Caco-2 (cell line): ENCODE measurements at regions of chrX and their contacts with region 1.

Region 1: DNA sequence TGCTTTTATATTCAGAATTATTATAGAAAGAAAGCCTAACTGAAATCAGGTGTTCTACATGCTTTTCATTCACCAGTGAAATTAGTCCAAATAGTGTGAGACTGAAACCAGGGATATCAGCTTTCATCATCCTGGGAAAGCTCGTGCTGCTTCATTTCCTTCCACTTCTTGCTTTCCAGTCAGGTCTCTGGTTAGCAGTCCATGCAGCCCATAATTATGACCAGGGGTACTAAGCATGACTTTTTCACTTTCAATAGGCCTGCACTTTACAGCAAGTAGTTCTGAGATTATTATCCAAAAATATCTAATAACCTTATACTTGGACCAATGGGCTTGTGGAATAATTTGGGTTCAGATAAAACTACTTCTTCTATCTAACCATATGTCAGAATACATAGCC is 673.2 kb upstream of the MAGEB2 start:
- DNase-seq: no peak
- H3K4me3 ChIP-seq: no peak overlapping the region
- H3K4me3 Mint-ChIP-seq: no peak overlapping the region
- H3K27ac Mint-ChIP-seq: no peak overlapping the region
- H3K4me1 ChIP-seq: peaks cover 13% of the 10 kb centered on the region
- H3K4me1 Mint-ChIP-seq: peaks cover 15% of the 10 kb centered on the region
- H3K27me3 ChIP-seq: no peaks in the 10 kb centered on the region
- H3K27me3 Mint-ChIP-seq: no peaks in the 10 kb centered on the region
- CTCF ChIP-seq: no peak

Region 2: DNA sequence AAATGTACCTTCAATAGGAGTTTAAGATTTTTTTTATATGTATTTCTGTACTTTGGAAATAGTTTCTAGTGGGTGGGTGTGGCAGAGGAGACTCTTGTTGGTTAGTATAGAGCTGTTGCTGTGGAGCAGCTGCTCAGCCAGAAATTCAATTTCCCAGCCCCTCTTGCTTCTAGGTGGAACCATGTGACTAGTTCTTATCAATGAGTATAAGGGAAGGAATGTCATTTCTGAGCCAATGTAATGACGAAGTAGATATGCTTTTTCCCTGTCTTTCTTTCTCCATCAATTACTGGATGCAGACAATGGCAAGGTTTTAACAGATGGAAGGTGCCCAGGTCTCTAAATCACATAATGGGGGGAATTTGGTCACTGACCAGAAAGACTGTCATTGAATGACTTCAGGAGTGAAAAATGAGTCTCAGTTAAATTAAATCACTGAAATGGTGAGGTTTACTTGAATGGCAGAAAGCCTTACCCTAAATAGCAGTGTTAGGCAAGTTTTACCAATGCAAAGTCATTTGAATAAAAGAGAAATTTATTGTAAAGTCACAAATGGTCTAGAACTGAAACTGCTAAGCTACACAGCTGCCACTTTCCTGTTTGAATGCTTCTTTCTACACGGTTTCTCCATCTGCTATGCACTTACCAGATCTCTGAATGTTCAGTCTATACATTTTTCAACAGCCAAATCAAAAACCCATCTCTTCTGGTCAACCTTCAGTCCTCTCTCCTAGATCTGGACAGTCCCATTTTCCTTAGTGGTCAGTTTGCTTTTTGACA is 122.2 kb before region 1 on chrX:
- CTCF ChIA-PET with region 1: no interaction called
- POLR2A ChIA-PET with region 1: no interaction called
- intact Hi-C with region 1: loop called (anchors 5 kb)
- DNase-seq: peak; percentile 21 to 50
- H3K4me3 ChIP-seq: no peak overlapping the region
- H3K4me3 Mint-ChIP-seq: no peak overlapping the region
- H3K27ac Mint-ChIP-seq: peak overlapping the region; percentile 71
- H3K4me1 ChIP-seq: peaks cover 40% of the 10 kb centered on the region
- H3K4me1 Mint-ChIP-seq: peaks cover 9% of the 10 kb centered on the region
- H3K27me3 ChIP-seq: no peaks in the 10 kb centered on the region
- H3K27me3 Mint-ChIP-seq: no peaks in the 10 kb centered on the region
- CTCF ChIP-seq: no peak

Region 3: GRCh38 chrX:29496636-29497180 is 45.4 kb before region 1 on chrX:
- CTCF ChIA-PET with region 1: no interaction called
- POLR2A ChIA-PET with region 1: no interaction called
- intact Hi-C with region 1: no loop called
- DNase-seq: no peak
- H3K4me3 ChIP-seq: no peak overlapping the region
- H3K4me3 Mint-ChIP-seq: no peak overlapping the region
- H3K27ac Mint-ChIP-seq: no peak overlapping the region
- H3K4me1 ChIP-seq: no peaks in the 10 kb centered on the region
- H3K4me1 Mint-ChIP-seq: no peaks in the 10 kb centered on the region
- H3K27me3 ChIP-seq: no peaks in the 10 kb centered on the region
- H3K27me3 Mint-ChIP-seq: no peaks in the 10 kb centered on the region
- CTCF ChIP-seq: no peak

Region 4: DNA sequence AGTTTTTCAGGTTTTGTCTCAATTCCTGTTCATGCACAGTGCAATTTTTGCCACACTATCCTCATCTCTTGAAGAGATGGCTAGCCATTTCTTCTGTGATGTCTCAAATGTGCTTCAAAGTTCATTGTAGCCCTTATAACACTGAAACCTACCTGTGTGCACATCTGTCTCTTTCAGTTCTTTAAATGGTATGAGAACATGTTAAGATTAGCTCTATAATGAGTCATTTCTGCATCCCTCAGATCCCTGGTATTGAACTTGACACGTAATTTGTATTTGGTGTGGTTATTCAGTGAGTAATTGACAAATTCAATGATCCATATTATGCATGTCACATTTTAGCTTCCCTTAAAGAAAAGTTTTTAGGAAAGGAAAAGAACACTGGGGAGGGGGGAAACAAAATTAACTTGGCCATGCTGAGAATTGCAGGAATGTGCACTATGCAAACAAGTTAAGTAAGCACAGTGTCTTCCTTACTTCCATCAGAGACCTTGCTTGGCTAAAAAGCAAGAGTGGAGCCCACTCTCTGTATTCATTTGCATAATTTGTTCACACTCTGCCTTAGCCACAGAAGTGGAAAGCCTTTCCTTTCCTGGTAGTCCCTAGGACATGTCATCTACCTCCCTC is 13.4 kb after region 1 on chrX:
- CTCF ChIA-PET with region 1: no interaction called
- POLR2A ChIA-PET with region 1: no interaction called
- intact Hi-C with region 1: no loop called
- DNase-seq: no peak
- H3K4me3 ChIP-seq: no peak overlapping the region
- H3K4me3 Mint-ChIP-seq: no peak overlapping the region
- H3K27ac Mint-ChIP-seq: no peak overlapping the region
- H3K4me1 ChIP-seq: peaks cover 12% of the 10 kb centered on the region
- H3K4me1 Mint-ChIP-seq: no peaks in the 10 kb centered on the region
- H3K27me3 ChIP-seq: no peaks in the 10 kb centered on the region
- H3K27me3 Mint-ChIP-seq: no peaks in the 10 kb centered on the region
- CTCF ChIP-seq: no peak

Region 5: DNA sequence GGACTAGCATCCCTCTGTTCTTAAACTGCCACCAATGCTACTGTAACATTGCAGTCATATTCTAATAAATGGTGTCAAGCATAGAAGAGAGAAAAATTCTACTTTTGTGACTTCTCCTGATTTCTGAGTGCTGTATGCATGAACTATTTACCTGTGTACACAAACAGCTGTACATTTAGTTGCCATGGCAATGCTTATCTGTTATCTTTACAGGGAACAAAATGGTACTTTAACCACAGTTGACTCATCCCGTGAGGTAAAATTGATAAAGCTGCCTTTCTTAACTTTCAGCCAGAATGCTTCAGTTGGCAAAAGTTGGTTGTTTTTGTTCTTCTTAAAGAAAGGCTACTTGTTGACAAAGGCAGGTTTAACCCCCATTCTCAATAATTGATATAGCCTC is 85.7 kb after region 1 on chrX:
- CTCF ChIA-PET with region 1: no interaction called
- POLR2A ChIA-PET with region 1: no interaction called
- intact Hi-C with region 1: no loop called
- DNase-seq: peak in 1 of 2 experiments; percentile 0
- H3K4me3 ChIP-seq: no peak overlapping the region
- H3K4me3 Mint-ChIP-seq: no peak overlapping the region
- H3K27ac Mint-ChIP-seq: no peak overlapping the region
- H3K4me1 ChIP-seq: no peaks in the 10 kb centered on the region
- H3K4me1 Mint-ChIP-seq: no peaks in the 10 kb centered on the region
- H3K27me3 ChIP-seq: no peaks in the 10 kb centered on the region
- H3K27me3 Mint-ChIP-seq: no peaks in the 10 kb centered on the region
- CTCF ChIP-seq: no peak

Region 6: GRCh38 chrX:30327762-30328161 is 785.6 kb after region 1 on chrX:
- CTCF ChIA-PET with region 1: no interaction called
- POLR2A ChIA-PET with region 1: no interaction called
- intact Hi-C with region 1: no loop called
- DNase-seq: peak in 1 of 2 experiments; percentile 0
- H3K4me3 ChIP-seq: no peak overlapping the region
- H3K4me3 Mint-ChIP-seq: no peak overlapping the region
- H3K27ac Mint-ChIP-seq: no peak overlapping the region
- H3K4me1 ChIP-seq: no peaks in the 10 kb centered on the region
- H3K4me1 Mint-ChIP-seq: no peaks in the 10 kb centered on the region
- H3K27me3 ChIP-seq: no peaks in the 10 kb centered on the region
- H3K27me3 Mint-ChIP-seq: peaks cover 2% of the 10 kb centered on the region
- CTCF ChIP-seq: no peak